Left lung (tissue), 14 donors: ENCODE measurements at regions of chr18 and their contacts with region 1.

Region 1: GRCh38 chr18:12934454-12935071 is 13.2 kb upstream of the SEH1L start:
- DNase-seq: peak; percentile 71 to 88 (median 84)
- ATAC-seq: peak; percentile 99
- H3K4me3 ChIP-seq: no peak overlapping the region
- H3K27ac ChIP-seq: no peak overlapping the region
- H3K4me1 ChIP-seq: peaks cover 0 to 6% of the 10 kb centered on the region in 2 donors
- H3K27me3 ChIP-seq: no peaks in the 10 kb centered on the region
- CTCF ChIP-seq: peak; percentile 81 to 86

Region 2: DNA sequence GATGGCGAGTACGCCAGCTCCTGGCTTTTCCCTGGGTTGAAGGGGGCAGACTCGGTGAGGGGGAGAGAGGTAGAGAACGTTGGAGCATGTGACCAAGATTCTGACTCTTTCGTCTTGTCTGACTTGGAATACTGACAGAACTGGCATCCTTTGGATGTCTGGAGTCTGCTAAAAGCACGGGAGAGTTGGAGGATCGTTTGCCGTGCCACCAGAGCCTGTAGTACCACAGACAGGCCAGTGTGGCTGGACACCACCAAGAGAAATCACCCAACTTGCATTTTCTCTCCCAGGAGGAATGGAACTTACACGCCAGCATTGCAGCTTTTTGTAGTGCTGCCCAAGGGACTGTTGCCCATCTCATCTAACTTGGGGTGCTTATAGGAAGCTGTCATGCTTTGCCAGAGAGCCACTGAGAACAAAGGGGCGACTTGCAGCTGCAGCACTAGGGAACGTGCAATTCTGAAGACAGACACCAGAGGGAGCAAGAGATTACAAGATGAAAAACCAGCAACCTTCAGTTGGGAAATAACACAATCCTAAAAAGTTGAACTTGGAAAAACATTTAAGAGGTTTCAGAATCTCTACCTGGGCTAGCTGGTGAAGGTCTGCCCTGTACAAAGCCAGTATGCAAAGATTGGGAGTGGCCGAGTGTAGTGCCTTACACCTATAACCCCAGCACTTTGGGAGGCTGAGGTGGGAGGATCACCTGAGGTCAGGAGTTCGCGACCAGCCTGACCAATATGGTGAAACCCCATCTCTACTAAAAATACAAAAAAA is 207.6 kb before region 1 on chr18:
- intact Hi-C with region 1: loop called in 1 of 2 experiments (anchors 5 kb)
- DNase-seq: peak in 2 of 4 donors; percentile 63 to 76
- ATAC-seq: peak; percentile 91
- H3K4me3 ChIP-seq: no peak overlapping the region
- H3K27ac ChIP-seq: no peak overlapping the region
- H3K4me1 ChIP-seq: no peaks in the 10 kb centered on the region
- H3K27me3 ChIP-seq: no peaks in the 10 kb centered on the region
- CTCF ChIP-seq: peak; percentile 80 to 94

Region 3: DNA sequence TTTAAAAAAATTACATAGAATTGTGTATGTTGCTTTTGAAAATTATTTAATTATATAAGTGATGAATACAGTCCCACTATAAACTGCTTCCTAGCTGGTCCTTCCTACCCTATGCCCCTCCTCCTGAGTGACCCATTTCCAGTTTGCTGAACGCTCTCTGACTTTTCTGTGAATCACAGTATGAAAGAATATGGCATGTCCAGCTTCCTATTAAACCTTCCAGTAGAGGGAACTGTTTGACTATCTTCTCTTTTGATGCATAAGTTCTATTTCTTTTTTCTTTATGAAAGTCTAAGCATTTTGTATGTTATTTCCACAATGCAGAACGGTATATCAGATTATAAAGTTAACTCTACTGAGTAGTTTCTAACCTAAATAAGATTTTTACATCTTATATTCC is 190.5 kb before region 1 on chr18:
- intact Hi-C with region 1: loop called in 1 of 2 experiments (anchors 5 kb)
- DNase-seq: peak in 2 of 4 donors; percentile 25 to 53
- ATAC-seq: peak; percentile 79
- H3K4me3 ChIP-seq: no peak overlapping the region
- H3K27ac ChIP-seq: no peak overlapping the region
- H3K4me1 ChIP-seq: no peaks in the 10 kb centered on the region
- H3K27me3 ChIP-seq: no peaks in the 10 kb centered on the region
- CTCF ChIP-seq: peak; percentile 53 to 62

Region 4: GRCh38 chr18:13353084-13353823 is 418.7 kb after region 1 on chr18:
- intact Hi-C with region 1: no loop called
- DNase-seq: no peak
- ATAC-seq: peak; percentile 37
- H3K4me3 ChIP-seq: no peak overlapping the region
- H3K27ac ChIP-seq: no peak overlapping the region
- H3K4me1 ChIP-seq: peaks cover 0 to 9% of the 10 kb centered on the region in 2 donors
- H3K27me3 ChIP-seq: no peaks in the 10 kb centered on the region
- CTCF ChIP-seq: no peak